Cardiac septum (tissue), 1 donor: ENCODE measurements at regions of chr1 and their contacts with region 1.

Region 1: GRCh38 chr1:244864253-244865027 is at the start of gene HNRNPU:
- DNase-seq: peak; percentile 98
- total RNA-seq, gene HNRNPU: 192 TPM

Region 2: DNA sequence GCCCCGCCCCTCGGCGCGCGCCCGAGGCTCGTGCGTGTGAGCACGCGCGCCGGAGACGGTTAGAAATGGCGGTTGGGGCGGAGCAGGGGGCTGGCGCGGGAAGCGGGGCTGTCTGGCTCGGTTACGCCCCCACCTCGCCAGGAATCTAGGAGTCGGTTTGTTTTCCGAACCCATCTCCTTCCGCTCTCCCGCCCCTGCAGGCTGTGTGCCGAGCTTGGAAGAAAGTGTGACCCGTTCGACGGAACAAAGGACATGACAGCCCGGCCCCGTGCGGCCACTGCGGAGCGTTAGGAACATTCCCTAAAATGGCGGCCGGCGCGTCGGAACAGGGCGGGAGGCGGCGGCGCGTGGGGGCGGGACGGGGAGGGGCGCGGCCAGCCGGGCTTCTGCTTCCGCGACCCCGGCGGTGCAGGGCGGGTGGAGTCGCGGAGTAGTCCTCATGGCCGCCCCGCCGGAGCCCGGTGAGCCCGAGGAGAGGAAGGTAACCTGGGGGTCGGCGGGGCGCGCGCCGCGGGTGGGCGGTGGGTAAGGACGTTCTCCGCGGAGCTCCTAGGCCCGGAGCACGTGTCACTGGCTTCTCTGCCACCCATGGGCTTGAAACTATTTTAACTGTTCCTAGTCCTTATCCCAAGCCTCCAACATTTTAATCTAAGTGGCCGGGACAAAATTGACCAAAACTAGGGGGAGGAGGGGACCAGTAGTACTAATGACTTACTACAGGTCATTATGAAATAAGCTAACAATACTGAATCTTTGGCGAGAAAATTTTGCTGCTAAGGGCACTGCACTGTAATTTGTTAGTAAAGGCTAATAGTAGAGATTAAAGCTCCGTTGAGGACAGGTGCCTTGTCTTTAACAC is 28.9 kb before region 1 on chr1 and contains the start of gene COX20:
- intact Hi-C with region 1: loop called (anchors 1 kb)
- DNase-seq: peak; percentile 94
- total RNA-seq, gene COX20: 83.7 TPM

Region 3: DNA sequence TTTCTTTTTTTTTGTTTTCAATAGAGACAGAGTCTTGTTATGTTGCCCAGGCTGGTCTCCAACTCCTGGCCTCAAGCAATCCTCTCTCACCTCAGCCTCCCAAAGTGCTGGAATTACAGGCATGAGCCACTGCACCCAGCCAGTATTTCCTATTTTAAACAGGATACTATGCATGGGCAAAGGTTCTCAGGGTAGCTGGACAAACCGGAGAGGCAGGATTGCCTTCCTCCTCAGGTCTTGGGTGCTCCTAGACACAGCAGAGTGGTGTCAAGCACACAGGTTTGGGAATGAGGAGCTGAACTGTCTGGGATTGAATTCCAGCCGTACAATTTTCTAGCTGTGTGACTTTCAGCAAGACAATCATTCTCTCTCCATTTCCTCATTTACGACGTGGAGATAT is 22.8 kb after region 1 on chr1:
- intact Hi-C with region 1: no loop called
- DNase-seq: no peak

Region 4: GRCh38 chr1:244918421-244919319 is 54.2 kb after region 1 on chr1:
- intact Hi-C with region 1: loop called (anchors 5 kb)
- DNase-seq: peak; percentile 83

Region 5: DNA sequence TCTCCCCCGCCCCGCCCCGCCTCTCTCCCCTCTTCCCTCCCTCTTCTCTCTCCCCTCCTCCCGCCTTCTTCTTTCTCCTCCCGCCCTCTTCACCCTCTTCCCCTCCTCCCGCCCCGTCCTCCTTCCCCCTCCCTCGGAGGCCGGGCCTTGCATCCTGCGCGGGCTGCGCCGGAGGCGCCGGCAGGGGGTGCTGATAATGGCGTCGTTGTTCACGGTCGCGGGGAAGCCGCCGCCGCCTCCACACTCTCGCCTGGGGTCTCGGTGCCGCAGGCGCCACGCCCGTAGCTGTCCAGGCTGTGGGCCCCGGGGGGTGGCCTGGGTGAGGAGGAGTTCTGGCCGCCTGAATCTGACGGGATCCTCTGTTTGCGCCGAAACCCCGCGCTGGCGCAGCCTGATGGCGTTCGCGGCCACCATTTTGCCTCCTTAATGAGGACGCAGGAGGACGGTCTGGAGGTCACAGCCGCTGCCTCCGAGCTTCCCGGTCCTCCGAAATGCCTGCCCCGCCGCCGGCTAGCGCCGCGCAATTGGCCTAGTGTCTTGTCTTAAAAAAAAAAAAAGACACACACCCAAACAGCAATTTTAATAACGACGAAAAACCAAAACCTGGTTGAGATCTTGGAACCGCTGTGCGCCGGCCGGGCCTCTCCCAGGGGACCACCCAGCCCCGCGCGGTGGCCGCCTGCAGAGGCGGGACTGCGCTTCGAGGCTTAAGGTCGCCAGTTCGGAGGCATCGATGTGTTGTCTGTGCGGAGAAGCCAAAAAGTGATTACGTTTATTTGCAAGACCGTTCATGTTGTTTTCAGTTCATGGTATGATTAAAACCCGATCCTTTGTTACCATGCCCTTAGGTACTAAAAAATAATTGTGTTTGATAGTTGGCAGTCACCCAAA is 106.5 kb after region 1 on chr1:
- intact Hi-C with region 1: loop called (anchors 1 kb)
- DNase-seq: peak; percentile 96